GM12878 (cell line): ENCODE measurements at regions of chr16 and their contacts with region 1.

Region 1: DNA sequence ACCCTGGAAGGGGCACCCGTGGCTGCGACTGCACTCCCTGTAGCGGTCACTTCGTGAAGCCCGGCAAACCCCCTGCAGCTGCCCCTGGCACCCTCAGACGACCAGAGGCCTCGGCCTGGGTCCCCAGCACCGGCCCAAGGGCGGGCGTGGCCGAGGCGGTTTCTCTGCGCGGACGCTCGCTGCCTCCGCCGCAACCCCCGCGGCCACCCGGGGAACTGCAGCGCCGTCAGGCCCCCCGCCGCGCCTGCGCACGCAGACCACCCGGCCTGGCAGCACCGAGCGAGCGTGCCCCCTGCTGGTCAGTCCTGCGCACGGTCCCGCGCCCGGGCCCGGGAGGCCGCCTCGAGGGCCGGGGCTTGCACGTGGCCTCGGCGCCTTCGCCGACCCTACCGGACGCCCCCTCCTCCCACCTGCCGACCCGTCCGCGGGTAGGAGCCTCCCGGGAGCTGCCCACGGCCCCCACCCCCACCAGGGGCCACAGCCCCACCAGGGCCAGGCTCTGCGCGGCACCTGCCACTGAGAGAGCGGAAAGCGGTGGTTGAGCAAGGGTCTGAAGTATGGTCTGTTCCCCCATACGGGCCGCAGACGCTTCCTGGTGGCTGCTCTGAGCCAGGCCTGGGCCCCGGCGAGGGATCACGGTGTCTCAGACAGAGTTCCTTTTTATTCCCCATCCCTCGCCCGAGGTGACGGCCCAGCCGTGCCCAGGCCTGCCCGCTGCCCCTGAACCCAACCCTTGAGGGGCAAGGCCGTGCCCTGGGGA is 11.5 kb upstream of the HS3ST6 start:
- DNase-seq: no peak
- ATAC-seq: peak; percentile 98
- H3K4me3 ChIP-seq: peak overlapping the region; percentile 60; the same call in 1 of the 2 replicates
- H3K27ac ChIP-seq: no peak overlapping the region
- H3K4me1 ChIP-seq: no peaks in the 10 kb centered on the region; the same call in 1 of the 2 replicates
- H3K27me3 ChIP-seq: no peaks in the 10 kb centered on the region; a peak in 3 of 4 replicates
- CTCF ChIP-seq: peak; percentile 79 to 97 (median 94); a peak in 4 of 6 replicates
- EP300 ChIP-seq: no peak
- POLR2A ChIP-seq: peak; percentile 43; the same call in 1 of the 2 replicates
- RAD21 ChIP-seq: peak; percentile 67

Region 2: DNA sequence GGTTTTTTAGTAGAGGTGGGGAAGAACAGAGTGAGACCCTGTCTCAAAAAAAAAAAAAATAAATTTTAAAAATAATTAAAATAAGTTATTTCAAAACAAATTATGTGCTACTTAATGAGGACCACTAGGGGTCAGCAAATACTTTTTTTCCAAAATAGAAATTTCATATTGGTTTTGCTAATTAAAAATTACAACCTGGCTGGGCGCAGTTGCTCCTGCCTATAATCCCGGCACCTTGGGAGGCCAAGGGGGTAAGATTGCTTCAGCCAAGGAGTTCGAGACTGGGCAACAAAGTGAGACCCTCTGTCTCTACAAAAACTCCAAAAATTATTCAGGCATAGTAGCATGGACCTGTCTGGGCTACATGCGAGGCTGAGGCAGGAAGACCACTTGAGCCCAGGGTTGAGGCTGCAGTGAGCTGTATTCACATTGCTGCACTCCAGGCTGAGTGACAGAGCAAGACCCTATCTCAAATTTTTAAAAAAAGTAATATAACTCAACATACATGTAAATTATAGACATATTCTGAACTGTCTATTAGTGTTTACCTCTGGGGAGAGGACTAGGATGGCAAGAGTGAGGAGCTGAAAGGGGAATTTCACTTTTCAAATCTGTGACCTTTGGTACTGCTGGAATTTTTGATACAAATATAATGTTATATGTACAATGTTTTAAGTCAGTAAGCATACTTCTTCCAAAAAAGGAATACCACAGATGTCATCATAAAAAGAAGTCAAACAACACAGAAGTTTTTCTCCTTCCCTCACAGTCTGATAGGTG is 65.9 kb before region 1 on chr16:
- CTCF ChIA-PET with region 1: interaction called, 21 read pairs
- POLR2A ChIA-PET with region 1: interaction called, 4 read pairs
- RAD21 ChIA-PET with region 1: interaction called, 3 read pairs
- SMC1A ChIA-PET with region 1: interaction called, 5 read pairs
- in situ Hi-C with region 1: loop called (anchors 10 kb)
- intact Hi-C with region 1: loop called (anchors 2 kb)
- DNase-seq: no peak
- ATAC-seq: peak; percentile 55
- H3K4me3 ChIP-seq: no peak overlapping the region
- H3K27ac ChIP-seq: no peak overlapping the region
- H3K4me1 ChIP-seq: no peaks in the 10 kb centered on the region
- H3K27me3 ChIP-seq: no peaks in the 10 kb centered on the region; a peak in 2 of 4 replicates
- CTCF ChIP-seq: peak; percentile 42 to 53 (median 42); a peak in 3 of 6 replicates
- EP300 ChIP-seq: no peak
- POLR2A ChIP-seq: no peak
- RAD21 ChIP-seq: peak; percentile 47